ENCODE measurements at regions of chr12 and their contacts with region 1.

Region 1: DNA sequence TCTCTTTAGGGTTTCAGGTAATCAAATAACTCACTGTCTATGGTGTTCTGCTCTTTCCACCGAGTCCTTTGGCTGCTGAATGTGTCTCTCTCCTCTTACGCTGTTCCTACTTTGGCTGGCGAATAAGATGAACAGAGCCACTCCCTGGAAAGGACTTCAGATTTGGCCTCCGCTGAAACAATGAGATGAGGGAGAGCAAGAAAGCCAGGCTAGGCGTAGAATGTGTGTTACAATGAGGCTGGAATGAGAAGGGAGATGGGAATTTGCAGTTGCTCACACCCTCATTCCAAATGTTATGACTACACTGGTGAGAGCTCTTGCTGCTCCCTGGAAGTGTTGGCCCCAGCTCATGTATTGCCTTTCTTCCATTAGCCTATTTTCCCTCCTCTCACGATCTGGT is at the start of gene MFAP5:
- DNase-seq: no peak
- H3K4me3 ChIP-seq: no peak within 1 kb of the TSS
- H3K27ac ChIP-seq: peak within 1 kb of the TSS in 1 of 5 donors; percentile 49
- H3K4me1 ChIP-seq: no peaks in the 10 kb centered on the region
- H3K27me3 ChIP-seq: no peaks in the 10 kb centered on the region
- CTCF ChIP-seq: no peak
- POLR2A ChIP-seq: no peak
- total RNA-seq, gene MFAP5: 0.68 to 39.3 (median 11.8) TPM

Region 2: GRCh38 chr12:8834230-8834629 is 171.6 kb after region 1 on chr12:
- intact Hi-C with region 1: no loop called
- DNase-seq: no peak
- H3K4me3 ChIP-seq: no peak overlapping the region
- H3K27ac ChIP-seq: no peak overlapping the region
- H3K4me1 ChIP-seq: no peaks in the 10 kb centered on the region
- H3K27me3 ChIP-seq: no peaks in the 10 kb centered on the region
- CTCF ChIP-seq: no peak
- POLR2A ChIP-seq: no peak

Region 3: DNA sequence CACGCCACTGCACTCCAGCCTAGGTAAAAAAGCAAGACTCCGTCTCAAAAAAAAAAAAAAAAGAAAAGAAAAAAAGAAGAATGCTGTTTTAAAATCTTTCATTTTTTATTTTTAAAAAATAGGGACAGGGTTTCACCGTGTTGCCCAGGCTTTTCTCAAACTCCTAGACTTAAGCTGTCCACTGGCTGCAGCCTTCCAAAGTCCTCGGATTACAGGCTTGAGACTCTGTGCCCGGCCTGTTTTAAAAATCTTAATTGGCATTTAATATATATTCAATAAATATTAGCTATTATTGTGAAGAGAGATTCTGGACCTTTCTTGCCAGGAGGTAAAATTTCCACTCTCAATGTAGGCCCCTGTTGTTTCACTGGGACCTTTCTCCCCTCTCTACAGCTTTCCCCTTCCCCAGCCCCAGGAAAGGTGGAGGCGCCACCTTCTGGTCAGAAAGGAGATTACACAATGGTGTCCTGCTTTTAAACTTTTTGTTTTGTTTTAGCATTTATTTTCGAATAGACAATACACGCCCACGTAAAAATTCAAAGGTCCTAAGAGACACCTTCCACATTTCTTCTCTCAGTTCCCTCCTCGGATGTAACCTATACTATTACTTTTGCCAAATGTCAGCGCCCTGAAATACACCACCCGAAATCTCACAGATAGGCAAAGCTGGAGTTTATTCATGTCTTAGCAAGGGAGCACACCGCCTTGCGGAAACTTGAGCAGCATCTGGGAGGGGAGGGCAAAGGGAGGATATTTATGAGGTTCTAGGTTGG is 227.9 kb after region 1 on chr12:
- intact Hi-C with region 1: loop called in 1 of 2 experiments (anchors 10 kb)
- DNase-seq: peak; percentile 18 to 68 (median 54)
- H3K4me3 ChIP-seq: peak overlapping the region in 3 of 4 donors; percentile 12 to 70 (median 49)
- H3K27ac ChIP-seq: no peak overlapping the region
- H3K4me1 ChIP-seq: no peaks in the 10 kb centered on the region
- H3K27me3 ChIP-seq: no peaks in the 10 kb centered on the region
- CTCF ChIP-seq: peak; percentile 71 to 94 (median 78)
- POLR2A ChIP-seq: no peak

Region 4: GRCh38 chr12:9032202-9033178 is 369.9 kb after region 1 on chr12:
- intact Hi-C with region 1: no loop called
- DNase-seq: peak in 1 of 7 donors; percentile 10
- H3K4me3 ChIP-seq: no peak overlapping the region
- H3K27ac ChIP-seq: no peak overlapping the region
- H3K4me1 ChIP-seq: no peaks in the 10 kb centered on the region
- H3K27me3 ChIP-seq: no peaks in the 10 kb centered on the region
- CTCF ChIP-seq: no peak
- POLR2A ChIP-seq: no peak